A549 (cell line): ENCODE measurements at regions of chr12 and their contacts with region 1.

Region 1: GRCh38 chr12:47882781-47883546 is 21.8 kb downstream of the VDR start:
- DNase-seq: no peak
- ATAC-seq: no peak; a peak in 1 of 6 replicates
- H3K4me3 ChIP-seq: no peak overlapping the region
- H3K27ac ChIP-seq: peak overlapping the region in 1 of 2 experiments; percentile 66; a peak in 4 of 6 replicates
- H3K4me1 ChIP-seq: peaks cover 9% of the 10 kb centered on the region; the same call in 1 of the 3 replicates
- CTCF ChIP-seq: no peak
- EP300 ChIP-seq: no peak
- POLR2A ChIP-seq: no peak
- RAD21 ChIP-seq: no peak

Region 2: GRCh38 chr12:47705566-47706425 is 177.2 kb before region 1 on chr12 and contains the start of gene RPAP3:
- CTCF ChIA-PET with region 1: no interaction called
- POLR2A ChIA-PET with region 1: no interaction called
- DNase-seq: peak; percentile 81 to 94
- ATAC-seq: peak; percentile 95 to 98
- H3K4me3 ChIP-seq: peak within 1 kb of the TSS; percentile 81
- H3K27ac ChIP-seq: peak within 1 kb of the TSS; percentile 90 to 96
- H3K4me1 ChIP-seq: peaks cover 21% of the 10 kb centered on the region; the same call in 2 of the 3 replicates
- CTCF ChIP-seq: peak; percentile 60
- EP300 ChIP-seq: no peak
- POLR2A ChIP-seq: peak; percentile 96
- RAD21 ChIP-seq: peak in 1 of 2 experiments; percentile 31; a peak in 1 of 5 replicates
- polyA plus RNA-seq, gene RPAP3: 51.9 and 74.6 TPM in 2 replicates

Region 3: GRCh38 chr12:47904713-47905310 is 21.8 kb after region 1 on chr12 and contains the start of gene VDR:
- CTCF ChIA-PET with region 1: interaction called, 13 read pairs
- POLR2A ChIA-PET with region 1: interaction called, 10 read pairs
- DNase-seq: peak; percentile 87 to 89
- ATAC-seq: peak; percentile 83 to 88
- H3K4me3 ChIP-seq: peak within 1 kb of the TSS; percentile 59
- H3K27ac ChIP-seq: peak within 1 kb of the TSS; percentile 67 to 78; a peak in 5 of 6 replicates
- H3K4me1 ChIP-seq: peaks cover 19% of the 10 kb centered on the region
- CTCF ChIP-seq: no peak; the same call in 2 of the 3 replicates
- EP300 ChIP-seq: no peak
- POLR2A ChIP-seq: peak; percentile 21; the same call in 1 of the 2 replicates
- RAD21 ChIP-seq: no peak
- polyA plus RNA-seq, gene VDR: 2.1 and 2.2 TPM in 2 replicates

Region 4: DNA sequence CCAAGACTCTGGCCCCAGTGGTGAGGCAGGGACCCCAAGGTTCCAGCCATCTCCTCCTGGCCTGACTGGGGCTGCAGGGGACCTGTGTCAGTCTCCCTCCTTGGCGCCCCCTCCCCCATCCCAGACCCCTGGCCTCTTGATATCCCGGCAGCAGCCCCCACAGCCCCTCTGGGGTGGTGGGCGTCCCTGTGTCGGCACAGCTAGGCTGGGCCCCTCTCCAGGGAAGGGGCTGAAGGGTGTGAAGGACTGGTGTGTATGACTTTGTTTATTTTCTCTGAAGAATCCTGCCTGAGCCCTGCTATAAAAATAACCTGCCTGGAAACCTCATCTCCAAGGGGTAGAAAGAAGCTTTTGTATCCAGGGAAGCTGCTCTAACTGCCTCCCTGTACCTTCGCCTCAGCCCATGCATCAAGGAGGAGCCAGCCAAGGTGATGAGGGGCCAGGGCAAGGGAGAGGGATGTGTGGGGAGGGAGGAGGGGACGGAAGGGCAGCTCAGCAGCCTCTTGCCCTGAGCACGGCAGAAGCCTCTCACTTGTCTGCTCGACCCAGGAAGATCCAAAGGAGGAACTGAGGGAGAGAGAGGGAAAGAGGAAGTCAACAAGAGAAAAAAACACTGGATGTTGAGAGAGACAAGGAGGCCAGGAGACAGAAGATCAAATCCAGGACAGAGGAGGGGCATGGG is 146.7 kb after region 1 on chr12:
- CTCF ChIA-PET with region 1: no interaction called
- POLR2A ChIA-PET with region 1: no interaction called
- DNase-seq: no peak
- ATAC-seq: no peak
- H3K4me3 ChIP-seq: no peak overlapping the region
- H3K27ac ChIP-seq: no peak overlapping the region
- H3K4me1 ChIP-seq: no peaks in the 10 kb centered on the region
- CTCF ChIP-seq: no peak
- EP300 ChIP-seq: no peak
- POLR2A ChIP-seq: no peak
- RAD21 ChIP-seq: no peak